ENCODE measurements at regions of chr10 and their contacts with region 1.

Region 1: DNA sequence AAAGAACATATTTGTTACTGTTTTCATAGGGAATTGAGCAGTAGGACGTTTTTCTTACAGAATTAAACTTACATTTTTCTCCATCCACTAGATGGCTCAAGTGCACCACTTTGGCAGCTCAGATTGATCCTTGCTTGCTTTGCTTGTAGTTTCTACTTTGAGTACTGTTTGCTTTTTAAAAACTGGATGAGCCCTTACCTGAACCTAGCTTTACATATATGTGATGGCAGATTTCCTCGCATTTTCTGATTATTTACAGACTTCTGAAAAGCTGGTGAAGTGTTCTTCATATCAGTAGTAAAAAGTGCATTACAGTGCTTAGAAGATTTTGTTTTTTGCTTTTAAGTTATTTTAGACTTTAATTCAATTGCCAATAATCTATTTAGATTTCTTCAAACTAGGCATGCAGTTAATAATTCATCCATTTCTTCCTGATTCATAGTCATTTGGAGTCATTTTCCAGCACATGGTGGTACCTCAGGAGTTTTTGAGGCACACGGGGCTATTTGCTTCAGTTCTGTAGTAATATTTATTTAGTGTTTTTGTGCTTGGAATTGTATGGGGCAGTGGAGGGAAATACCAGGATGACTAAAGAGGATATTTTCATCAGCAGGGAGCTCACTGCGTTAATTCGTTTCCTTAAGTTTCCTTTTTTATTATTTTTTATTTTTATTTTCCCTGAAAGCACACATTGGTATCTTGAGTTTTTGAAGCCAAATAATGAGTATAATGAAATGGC is 57.3 kb downstream of the MAPK8 start:
- DNase-seq: peak; percentile 59
- ATAC-seq: no peak
- H3K4me3 ChIP-seq: no peak overlapping the region
- H3K4me3 Mint-ChIP-seq: no peak overlapping the region
- H3K27ac ChIP-seq: no peak overlapping the region
- H3K27ac Mint-ChIP-seq: no peak overlapping the region
- H3K4me1 ChIP-seq: no peaks in the 10 kb centered on the region
- H3K4me1 Mint-ChIP-seq: peaks cover 5% of the 10 kb centered on the region
- H3K27me3 ChIP-seq: no peaks in the 10 kb centered on the region
- H3K27me3 Mint-ChIP-seq: no peaks in the 10 kb centered on the region
- CTCF ChIP-seq: peak; percentile 71

Region 2: GRCh38 chr10:48353246-48353645 is 10.5 kb before region 1 on chr10:
- CTCF ChIA-PET with region 1: interaction called, 11 read pairs
- POLR2A ChIA-PET with region 1: no interaction called
- intact Hi-C with region 1: no loop called
- DNase-seq: no peak
- ATAC-seq: no peak
- H3K4me3 ChIP-seq: no peak overlapping the region
- H3K4me3 Mint-ChIP-seq: no peak overlapping the region
- H3K27ac ChIP-seq: no peak overlapping the region
- H3K27ac Mint-ChIP-seq: no peak overlapping the region
- H3K4me1 ChIP-seq: no peaks in the 10 kb centered on the region
- H3K4me1 Mint-ChIP-seq: peaks cover 9% of the 10 kb centered on the region
- H3K27me3 ChIP-seq: no peaks in the 10 kb centered on the region
- H3K27me3 Mint-ChIP-seq: no peaks in the 10 kb centered on the region
- CTCF ChIP-seq: no peak

Region 3: DNA sequence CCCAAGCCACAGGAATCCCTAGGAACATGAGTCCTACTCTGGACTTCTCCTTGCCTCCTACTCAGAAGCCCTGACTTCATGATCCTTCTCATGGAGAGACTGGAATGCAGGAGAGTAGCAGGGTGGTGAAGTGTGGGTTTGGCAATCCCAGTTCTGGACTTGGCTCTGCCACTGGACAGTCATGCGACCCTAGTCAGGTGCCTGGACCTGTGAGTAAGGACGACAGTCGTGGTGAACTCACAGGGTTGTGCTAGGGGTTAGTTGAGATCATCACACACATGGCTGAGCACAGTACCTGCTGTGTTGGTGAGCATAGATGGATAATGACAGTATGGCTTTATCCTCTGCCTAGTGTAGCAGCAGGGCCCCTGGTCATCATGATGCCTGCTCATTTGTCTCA is 457.9 kb after region 1 on chr10:
- CTCF ChIA-PET with region 1: no interaction called
- POLR2A ChIA-PET with region 1: no interaction called
- intact Hi-C with region 1: no loop called
- DNase-seq: no peak
- ATAC-seq: no peak
- H3K4me3 ChIP-seq: no peak overlapping the region
- H3K4me3 Mint-ChIP-seq: no peak overlapping the region
- H3K27ac ChIP-seq: no peak overlapping the region
- H3K27ac Mint-ChIP-seq: peak overlapping the region; percentile 72
- H3K4me1 ChIP-seq: no peaks in the 10 kb centered on the region
- H3K4me1 Mint-ChIP-seq: peaks cover 3% of the 10 kb centered on the region
- H3K27me3 ChIP-seq: no peaks in the 10 kb centered on the region
- H3K27me3 Mint-ChIP-seq: no peaks in the 10 kb centered on the region
- CTCF ChIP-seq: no peak